HepG2 (cell line): ENCODE measurements at regions of chr17 and their contacts with region 1.

Region 1: DNA sequence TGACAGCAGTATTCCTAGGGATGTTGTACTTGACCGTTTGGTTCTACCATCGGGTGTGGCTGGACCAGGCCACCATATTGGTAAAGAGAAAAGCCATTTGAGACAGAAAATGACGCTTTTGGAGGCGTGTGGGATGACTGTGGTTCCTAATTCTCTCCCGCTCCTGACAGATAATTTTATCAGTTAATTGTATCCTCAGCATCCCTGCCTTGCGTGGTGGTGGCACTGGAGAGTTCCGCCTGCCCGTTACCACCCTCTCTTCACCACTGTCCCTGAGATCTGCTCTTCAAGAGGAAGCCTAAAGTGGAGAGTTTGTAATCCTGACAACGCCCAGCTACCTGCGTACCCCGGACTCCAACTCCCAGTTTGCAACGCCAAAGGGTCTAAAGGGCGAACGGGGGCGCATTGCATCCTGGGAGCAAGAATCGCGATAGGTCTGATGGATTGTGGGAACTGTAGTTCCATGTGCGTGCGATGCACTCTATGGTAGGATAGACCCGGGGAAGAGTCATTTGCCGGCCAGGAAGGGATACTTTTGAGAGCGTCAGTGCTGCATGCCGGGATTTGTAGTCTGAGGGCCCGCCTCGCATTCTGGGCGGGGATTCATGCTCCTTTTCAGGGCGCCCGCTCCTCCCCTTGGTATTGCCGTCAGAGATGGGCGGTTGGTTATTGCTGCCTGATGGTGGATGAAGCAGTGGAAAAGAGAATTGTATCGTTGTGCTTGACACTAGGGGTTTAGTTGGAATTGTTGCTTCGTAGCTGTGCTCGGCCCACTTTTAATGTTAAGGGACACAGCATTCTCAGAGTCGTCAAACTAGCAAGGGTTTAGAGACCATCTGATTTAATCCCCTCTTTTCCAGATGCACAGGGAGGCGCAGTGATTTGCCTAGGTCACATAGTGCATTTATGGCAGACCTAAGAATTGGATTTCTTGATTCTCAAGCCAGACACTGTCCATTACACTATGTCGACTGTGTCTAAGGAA is 965 bp upstream of the PHF12 start:
- DNase-seq: peak; percentile 99
- ATAC-seq: peak; percentile 86
- H3K4me3 ChIP-seq: peak overlapping the region; percentile 70 to 88 (median 71)
- H3K27ac ChIP-seq: peak overlapping the region; percentile 99
- H3K4me1 ChIP-seq: peaks cover 23% of the 10 kb centered on the region
- H3K27me3 ChIP-seq: no peaks in the 10 kb centered on the region; a peak in 1 of 5 replicates
- CTCF ChIP-seq: no peak
- EP300 ChIP-seq: peak in 1 of 2 experiments; percentile 33; a peak in 1 of 4 replicates
- POLR2A ChIP-seq: peak in 1 of 2 experiments; percentile 81; a peak in 3 of 4 replicates
- RAD21 ChIP-seq: peak; percentile 44; the same call in 1 of the 2 replicates

Region 2: GRCh38 chr17:28842282-28843012 is 109.8 kb before region 1 on chr17 and contains the start of gene FAM222B:
- CTCF ChIA-PET with region 1: no interaction called
- POLR2A ChIA-PET with region 1: interaction called, 11 read pairs
- in situ Hi-C with region 1: no loop called
- intact Hi-C with region 1: no loop called
- DNase-seq: peak; percentile 79
- ATAC-seq: peak; percentile 98
- H3K4me3 ChIP-seq: peak within 1 kb of the TSS; percentile 73 to 92 (median 74)
- H3K27ac ChIP-seq: peak within 1 kb of the TSS; percentile 59
- H3K4me1 ChIP-seq: peaks cover 20% of the 10 kb centered on the region
- H3K27me3 ChIP-seq: no peaks in the 10 kb centered on the region; a peak in 1 of 5 replicates
- CTCF ChIP-seq: no peak
- EP300 ChIP-seq: no peak
- POLR2A ChIP-seq: peak; percentile 58 to 79
- RAD21 ChIP-seq: no peak
- total RNA-seq, gene FAM222B: 3.5 and 4.7 TPM in 2 replicates

Region 3: GRCh38 chr17:28908640-28909167 is 43.6 kb before region 1 on chr17:
- CTCF ChIA-PET with region 1: interaction called, 4 read pairs
- POLR2A ChIA-PET with region 1: interaction called, 15 read pairs
- in situ Hi-C with region 1: loop called (anchors 5 kb)
- intact Hi-C with region 1: no loop called
- DNase-seq: peak; percentile 86
- ATAC-seq: peak; percentile 80
- H3K4me3 ChIP-seq: no peak overlapping the region; a peak in 1 of 6 replicates
- H3K27ac ChIP-seq: peak overlapping the region; percentile 70
- H3K4me1 ChIP-seq: peaks cover 63% of the 10 kb centered on the region
- H3K27me3 ChIP-seq: no peaks in the 10 kb centered on the region
- CTCF ChIP-seq: 0 out of 2 replicates have a peak, but pooled peaks have one; percentile 5
- EP300 ChIP-seq: no peak
- POLR2A ChIP-seq: no peak
- RAD21 ChIP-seq: no peak

Region 4: DNA sequence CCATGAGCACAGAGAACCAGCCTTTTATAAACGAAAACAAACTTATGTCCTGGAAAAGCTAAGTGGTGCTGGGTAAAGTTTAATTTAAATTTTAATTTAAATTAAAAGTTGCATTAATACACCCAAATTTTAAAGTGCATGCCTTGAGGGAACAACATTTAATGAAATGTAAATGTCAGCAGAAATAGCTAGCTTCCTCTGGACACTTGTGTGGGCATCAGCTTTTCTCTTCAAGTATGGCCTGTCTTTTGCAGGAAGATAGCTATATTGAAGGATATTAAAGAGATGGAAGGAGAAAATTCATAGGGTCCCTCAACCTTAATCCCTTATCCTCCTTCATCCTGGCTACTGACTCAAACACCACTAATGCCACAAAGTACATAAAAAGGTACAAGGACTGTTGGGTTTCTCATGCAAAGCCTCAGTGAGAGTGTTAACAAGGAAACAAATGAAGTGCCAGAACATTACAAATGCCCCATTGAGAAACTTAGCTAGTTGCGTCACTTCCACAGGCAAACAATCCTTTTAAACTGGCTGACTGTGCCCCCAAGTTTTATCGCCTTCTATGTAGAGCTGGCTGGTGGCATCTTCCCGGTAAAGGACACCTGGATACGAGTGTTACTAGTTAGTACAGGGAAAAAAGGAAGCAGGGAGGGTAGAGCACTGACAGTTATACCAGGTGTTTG is 15.1 kb before region 1 on chr17:
- CTCF ChIA-PET with region 1: no interaction called
- POLR2A ChIA-PET with region 1: interaction called, 57 read pairs
- in situ Hi-C with region 1: no loop called
- intact Hi-C with region 1: no loop called
- DNase-seq: peak; percentile 85
- ATAC-seq: peak; percentile 85
- H3K4me3 ChIP-seq: peak overlapping the region in 1 of 3 experiments; percentile 5; a peak in 1 of 6 replicates
- H3K27ac ChIP-seq: peak overlapping the region; percentile 55
- H3K4me1 ChIP-seq: peaks cover 54% of the 10 kb centered on the region
- H3K27me3 ChIP-seq: no peaks in the 10 kb centered on the region
- CTCF ChIP-seq: no peak
- EP300 ChIP-seq: peak in 1 of 2 experiments; percentile 60; a peak in 1 of 4 replicates
- POLR2A ChIP-seq: no peak
- RAD21 ChIP-seq: no peak

Region 5: GRCh38 chr17:29042679-29043538 is 90.6 kb after region 1 on chr17 and contains the start of gene PIPOX:
- CTCF ChIA-PET with region 1: no interaction called
- POLR2A ChIA-PET with region 1: interaction called, 12 read pairs
- in situ Hi-C with region 1: no loop called
- intact Hi-C with region 1: no loop called
- DNase-seq: peak; percentile 90
- ATAC-seq: peak; percentile 87
- H3K4me3 ChIP-seq: peak within 1 kb of the TSS; percentile 63 to 78 (median 63)
- H3K27ac ChIP-seq: peak within 1 kb of the TSS; percentile 94
- H3K4me1 ChIP-seq: peaks cover 87% of the 10 kb centered on the region
- H3K27me3 ChIP-seq: peaks cover 0 to 3% of the 10 kb centered on the region in 2 experiments; a peak in 1 of 5 replicates
- CTCF ChIP-seq: peak; percentile 74
- EP300 ChIP-seq: no peak
- POLR2A ChIP-seq: peak; percentile 83 to 92
- RAD21 ChIP-seq: no peak
- total RNA-seq, gene PIPOX: 87.3 and 118 TPM in 2 replicates